ENCODE measurements at regions of chr9 and their contacts with region 1.

Region 1: DNA sequence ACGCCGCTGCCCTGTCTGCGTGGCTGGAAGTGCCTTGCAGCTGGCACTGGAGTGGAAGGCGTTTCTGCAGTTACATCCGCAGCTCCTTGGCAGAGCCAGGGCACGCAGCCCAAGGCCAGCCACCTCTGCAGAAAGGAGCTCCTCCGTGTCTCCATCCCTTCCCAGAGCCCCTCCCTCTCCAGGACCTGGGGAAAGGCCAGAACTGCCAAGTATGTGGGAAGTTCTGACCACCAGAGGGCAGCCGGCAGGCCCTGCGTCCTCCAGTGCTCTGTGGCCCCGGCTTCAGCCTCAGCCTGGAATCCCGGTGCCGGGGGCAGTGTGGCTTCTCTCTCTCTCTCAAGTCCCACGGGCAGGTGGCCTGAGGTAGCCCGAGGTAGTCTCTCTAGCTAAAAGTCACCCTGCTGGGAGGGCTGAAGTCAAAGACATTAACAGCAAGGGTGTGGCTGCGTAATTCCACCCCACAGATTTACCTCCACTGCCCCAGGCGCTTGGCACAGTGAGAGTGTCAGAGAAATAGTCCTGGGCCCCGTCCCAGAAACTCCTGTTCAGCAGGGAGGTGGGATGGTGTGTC is 101.7 kb upstream of the FCN2 start:
- DNase-seq: peak; percentile 78
- ATAC-seq: peak; percentile 76

Region 2: GRCh38 chr9:134896005-134896833 is 117.3 kb after region 1 on chr9:
- intact Hi-C with region 1: loop called (anchors 10 kb)
- DNase-seq: peak; percentile 64
- ATAC-seq: peak; percentile 80

Region 3: DNA sequence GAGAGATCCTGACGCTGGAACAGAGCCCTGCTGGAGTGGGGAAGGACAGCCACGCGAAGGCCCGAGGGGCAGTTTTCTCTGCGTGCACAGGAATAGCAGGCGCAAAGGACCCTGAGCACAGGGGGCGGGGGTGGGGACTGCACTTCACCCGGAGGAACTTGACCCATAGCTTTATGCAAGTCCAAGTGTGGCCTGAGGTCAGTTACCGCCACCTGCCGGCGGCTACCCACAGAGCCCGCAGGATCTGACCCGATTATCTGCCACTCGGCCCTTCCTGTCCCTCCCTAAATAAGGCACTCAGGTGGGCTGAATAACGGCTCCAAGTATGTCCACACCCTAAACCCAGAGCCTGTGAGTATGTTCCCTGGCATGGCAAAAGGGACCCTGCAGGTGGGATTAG is 204.1 kb after region 1 on chr9:
- intact Hi-C with region 1: loop called (anchors 5 kb)
- DNase-seq: peak; percentile 83
- ATAC-seq: peak; percentile 80